IMR-90 (cell line): ENCODE measurements at regions of chr2 and their contacts with region 1.

Region 1: DNA sequence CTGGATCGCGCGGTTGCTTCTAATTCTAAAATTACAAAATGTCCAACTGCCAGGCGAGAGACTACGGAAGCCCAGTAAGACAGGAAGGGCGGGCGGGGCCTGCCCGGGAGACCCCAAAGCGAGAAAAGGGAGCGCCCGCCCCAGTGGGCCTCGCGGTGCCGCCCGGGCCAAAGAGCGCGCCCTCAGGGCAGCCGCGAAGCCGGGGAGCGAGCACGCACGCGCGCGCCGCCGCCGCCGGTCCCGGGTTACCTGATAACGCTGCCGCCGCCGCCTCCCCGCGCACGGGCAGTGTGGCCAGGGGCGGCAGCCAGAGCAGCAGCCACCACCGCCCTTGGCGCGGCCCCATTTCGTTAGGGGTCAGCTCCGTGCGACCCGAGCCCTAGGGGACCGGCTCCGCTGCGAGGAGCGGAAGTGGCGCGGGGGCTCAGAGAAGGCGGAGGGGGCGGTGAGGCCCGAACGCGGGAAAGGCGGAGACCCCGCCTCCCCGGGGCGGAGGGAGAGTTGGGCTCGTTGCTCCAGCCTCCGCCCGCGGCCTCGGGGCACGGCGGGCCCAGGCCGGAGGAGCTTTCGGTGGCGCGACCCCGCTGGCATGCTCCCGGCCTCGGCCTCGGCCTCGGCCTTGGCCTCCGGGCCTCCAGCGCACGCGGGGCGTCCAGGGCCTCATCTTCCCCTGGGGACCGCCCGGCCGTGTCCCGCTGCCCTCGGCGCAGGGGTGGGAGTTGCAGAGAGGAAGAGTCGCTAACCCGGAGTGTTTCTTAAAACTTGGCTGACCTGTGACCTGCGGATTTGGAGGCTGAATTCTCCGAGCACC is at the start of gene NEMP2:
- DNase-seq: peak; percentile 16
- ATAC-seq: peak; percentile 90
- H3K4me3 ChIP-seq: peak within 1 kb of the TSS; percentile 80
- H3K27ac ChIP-seq: peak within 1 kb of the TSS; percentile 76
- H3K4me1 ChIP-seq: peaks cover 15% of the 10 kb centered on the region
- H3K27me3 ChIP-seq: no peaks in the 10 kb centered on the region
- CTCF ChIP-seq: no peak
- POLR2A ChIP-seq: no peak
- RAD21 ChIP-seq: no peak
- total RNA-seq, gene NEMP2: 1.3 and 2.2 TPM in 2 replicates

Region 2: GRCh38 chr2:190545555-190546385 is 11.3 kb after region 1 on chr2:
- CTCF ChIA-PET with region 1: no interaction called
- POLR2A ChIA-PET with region 1: no interaction called
- dilution Hi-C with region 1: no loop called
- in situ Hi-C with region 1: no loop called
- intact Hi-C with region 1: loop called (anchors 1 kb)
- DNase-seq: peak; percentile 58
- ATAC-seq: peak; percentile 88
- H3K4me3 ChIP-seq: peak overlapping the region; percentile 31; the same call in 1 of the 2 replicates
- H3K27ac ChIP-seq: no peak overlapping the region
- H3K4me1 ChIP-seq: no peaks in the 10 kb centered on the region
- H3K27me3 ChIP-seq: no peaks in the 10 kb centered on the region
- CTCF ChIP-seq: no peak
- POLR2A ChIP-seq: no peak
- RAD21 ChIP-seq: no peak

Region 3: GRCh38 chr2:190574169-190574568 is 39.7 kb after region 1 on chr2:
- CTCF ChIA-PET with region 1: no interaction called
- POLR2A ChIA-PET with region 1: no interaction called
- dilution Hi-C with region 1: no loop called
- in situ Hi-C with region 1: no loop called
- intact Hi-C with region 1: loop called (anchors 1 kb)
- DNase-seq: peak; percentile 59
- ATAC-seq: peak; percentile 68
- H3K4me3 ChIP-seq: no peak overlapping the region
- H3K27ac ChIP-seq: no peak overlapping the region
- H3K4me1 ChIP-seq: peaks cover 2% of the 10 kb centered on the region; the same call in 1 of the 2 replicates
- H3K27me3 ChIP-seq: peaks cover 2% of the 10 kb centered on the region
- CTCF ChIP-seq: no peak
- POLR2A ChIP-seq: no peak
- RAD21 ChIP-seq: no peak

Region 4: DNA sequence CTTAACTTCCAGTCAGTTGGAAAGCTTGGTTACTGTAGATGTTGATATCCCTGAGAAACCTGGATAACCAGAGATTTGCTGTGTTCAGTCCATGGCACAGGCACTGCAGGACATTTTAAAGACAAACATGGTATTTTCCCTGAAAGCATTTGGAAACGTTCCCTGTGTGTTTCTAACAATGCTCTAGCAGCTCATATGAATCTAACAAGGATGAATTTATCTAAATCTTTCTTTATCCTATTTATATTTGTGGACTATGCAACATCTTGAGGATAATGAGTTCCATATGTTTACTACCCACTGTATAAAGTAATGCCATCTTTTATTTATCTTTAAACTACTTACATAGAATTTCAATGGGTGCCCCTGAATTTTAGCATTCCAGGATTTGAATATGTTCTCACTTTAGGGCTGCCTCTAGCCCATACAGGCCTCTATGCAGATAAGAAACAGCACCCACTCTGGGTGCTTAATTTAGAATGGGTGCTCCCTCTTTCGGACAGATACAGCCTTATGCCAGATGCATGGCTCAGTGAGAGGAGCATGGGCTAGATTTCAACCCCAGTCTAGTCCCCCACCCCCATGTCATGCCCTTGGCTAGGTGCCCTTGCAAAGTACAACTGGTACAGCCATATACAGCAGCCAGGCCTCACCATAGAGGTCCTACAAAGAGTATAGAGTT is 50.6 kb after region 1 on chr2:
- CTCF ChIA-PET with region 1: no interaction called
- POLR2A ChIA-PET with region 1: no interaction called
- dilution Hi-C with region 1: no loop called
- in situ Hi-C with region 1: no loop called
- intact Hi-C with region 1: no loop called
- DNase-seq: no peak
- ATAC-seq: peak; percentile 17; the same call in 1 of the 2 replicates
- H3K4me3 ChIP-seq: no peak overlapping the region
- H3K27ac ChIP-seq: no peak overlapping the region
- H3K4me1 ChIP-seq: peaks cover 2% of the 10 kb centered on the region; the same call in 1 of the 2 replicates
- H3K27me3 ChIP-seq: peaks cover 2% of the 10 kb centered on the region; the same call in 1 of the 2 replicates
- CTCF ChIP-seq: no peak
- POLR2A ChIP-seq: no peak
- RAD21 ChIP-seq: no peak

Region 5: DNA sequence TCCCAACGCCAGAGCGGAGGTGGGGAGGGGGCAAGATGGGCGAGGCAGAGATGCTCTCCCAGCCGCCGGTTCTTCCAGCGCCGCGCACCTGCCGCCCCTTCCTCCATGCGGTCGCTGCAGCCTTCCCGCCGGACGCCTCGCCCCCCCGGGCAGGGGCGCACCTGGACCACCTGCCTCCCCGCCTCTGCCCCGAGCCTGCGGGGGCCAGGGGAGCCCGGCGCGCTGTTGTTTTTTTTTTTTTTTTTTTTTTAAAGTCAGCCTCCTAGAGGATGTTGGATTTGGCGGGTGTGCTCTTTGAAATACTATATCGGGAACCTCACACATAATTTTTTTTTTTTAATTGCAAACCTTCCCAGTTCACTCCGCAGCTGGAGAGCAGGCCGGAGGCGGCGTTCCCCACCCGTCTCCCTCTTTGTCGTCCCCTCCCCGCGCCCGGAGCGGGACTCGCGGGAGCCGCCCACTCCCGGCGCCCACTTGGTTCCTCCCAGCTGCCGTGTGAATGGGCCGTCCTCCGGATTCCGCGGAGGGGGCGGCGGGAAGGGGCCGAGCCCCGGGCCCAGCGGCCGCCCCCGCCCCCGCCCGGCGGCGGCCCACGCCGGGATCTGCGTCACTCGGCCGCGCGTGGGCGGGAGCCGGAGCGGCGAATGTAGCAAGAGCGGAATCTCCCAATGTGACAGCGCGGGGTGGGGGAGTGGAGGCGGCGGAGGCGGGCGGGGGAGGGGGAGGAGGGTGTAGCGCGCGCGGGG is 113.9 kb after region 1 on chr2:
- CTCF ChIA-PET with region 1: no interaction called
- POLR2A ChIA-PET with region 1: no interaction called
- dilution Hi-C with region 1: no loop called
- in situ Hi-C with region 1: no loop called
- intact Hi-C with region 1: loop called (anchors 2 kb)
- DNase-seq: peak; percentile 88
- ATAC-seq: peak; percentile 89
- H3K4me3 ChIP-seq: peak overlapping the region; percentile 36
- H3K27ac ChIP-seq: peak overlapping the region; percentile 0; the same call in 1 of the 2 replicates
- H3K4me1 ChIP-seq: 0 out of 2 replicates have a peak, but pooled peaks cover 2% of the 10 kb centered on the region
- H3K27me3 ChIP-seq: no peaks in the 10 kb centered on the region
- CTCF ChIP-seq: no peak
- POLR2A ChIP-seq: no peak; the same call in 1 of the 2 replicates
- RAD21 ChIP-seq: no peak

Region 6: DNA sequence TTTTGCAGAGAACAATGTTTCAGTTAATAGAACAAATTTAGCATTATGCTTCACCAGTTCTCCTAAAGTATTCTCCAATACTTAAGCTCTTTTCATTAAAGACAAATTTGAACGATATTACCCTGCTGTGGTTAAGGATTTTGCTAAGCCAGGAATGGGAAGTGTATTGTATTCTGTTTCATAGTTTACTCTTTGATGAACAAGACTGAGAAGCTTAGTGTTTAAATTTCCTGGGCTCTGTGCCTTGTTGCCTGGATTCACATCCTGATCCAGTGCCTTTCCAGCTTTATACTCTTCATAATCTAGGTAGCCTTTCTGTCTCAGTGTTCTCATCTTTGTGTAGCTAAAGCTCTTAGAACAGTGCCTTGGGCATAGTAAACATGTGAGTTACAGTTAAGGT is 287.5 kb after region 1 on chr2:
- CTCF ChIA-PET with region 1: no interaction called
- POLR2A ChIA-PET with region 1: no interaction called
- dilution Hi-C with region 1: no loop called
- in situ Hi-C with region 1: no loop called
- intact Hi-C with region 1: no loop called
- DNase-seq: no peak
- ATAC-seq: no peak
- H3K4me3 ChIP-seq: no peak overlapping the region
- H3K27ac ChIP-seq: no peak overlapping the region
- H3K4me1 ChIP-seq: peaks cover 5% of the 10 kb centered on the region
- H3K27me3 ChIP-seq: no peaks in the 10 kb centered on the region
- CTCF ChIP-seq: no peak
- POLR2A ChIP-seq: no peak
- RAD21 ChIP-seq: no peak